CD14-positive monocyte (primary cell): ENCODE measurements at regions of chr9 and their contacts with region 1.

Region 1: GRCh38 chr9:3732077-3733038 is 206.6 kb upstream of the RFX3 start:
- DNase-seq: peak; percentile 19 to 72 (median 54)
- H3K4me3 ChIP-seq: no peak overlapping the region
- H3K4me3 Mint-ChIP-seq: peak overlapping the region in 1 of 2 donors; percentile 51
- H3K27ac ChIP-seq: no peak overlapping the region
- H3K27ac Mint-ChIP-seq: peak overlapping the region in 1 of 7 donors; percentile 24
- H3K4me1 ChIP-seq: peaks cover 14 to 17% of the 10 kb centered on the region in 2 donors
- H3K4me1 Mint-ChIP-seq: peaks cover 18% of the 10 kb centered on the region
- H3K27me3 ChIP-seq: no peaks in the 10 kb centered on the region
- H3K27me3 Mint-ChIP-seq: peaks cover 0 to 1% (median 0%) of the 10 kb centered on the region in 3 donors
- CTCF ChIP-seq: peak; percentile 81

Region 2: GRCh38 chr9:3793971-3794383 is 61.6 kb after region 1 on chr9:
- intact Hi-C with region 1: no loop called
- DNase-seq: no peak
- H3K4me3 ChIP-seq: no peak overlapping the region
- H3K4me3 Mint-ChIP-seq: no peak overlapping the region
- H3K27ac ChIP-seq: no peak overlapping the region
- H3K27ac Mint-ChIP-seq: no peak overlapping the region
- H3K4me1 ChIP-seq: no peaks in the 10 kb centered on the region
- H3K4me1 Mint-ChIP-seq: no peaks in the 10 kb centered on the region
- H3K27me3 ChIP-seq: no peaks in the 10 kb centered on the region
- H3K27me3 Mint-ChIP-seq: peaks cover 0 to 1% (median 1%) of the 10 kb centered on the region in 3 donors
- CTCF ChIP-seq: no peak

Region 3: GRCh38 chr9:4117835-4118610 is 385.7 kb after region 1 on chr9:
- intact Hi-C with region 1: loop called (anchors 5 to 10 kb)
- DNase-seq: peak; percentile 1 to 29 (median 19)
- H3K4me3 ChIP-seq: no peak overlapping the region
- H3K4me3 Mint-ChIP-seq: no peak overlapping the region
- H3K27ac ChIP-seq: no peak overlapping the region
- H3K27ac Mint-ChIP-seq: no peak overlapping the region
- H3K4me1 ChIP-seq: no peaks in the 10 kb centered on the region
- H3K4me1 Mint-ChIP-seq: no peaks in the 10 kb centered on the region
- H3K27me3 ChIP-seq: no peaks in the 10 kb centered on the region
- H3K27me3 Mint-ChIP-seq: peaks cover 0 to 2% (median 2%) of the 10 kb centered on the region in 3 donors
- CTCF ChIP-seq: peak; percentile 71

Region 4: DNA sequence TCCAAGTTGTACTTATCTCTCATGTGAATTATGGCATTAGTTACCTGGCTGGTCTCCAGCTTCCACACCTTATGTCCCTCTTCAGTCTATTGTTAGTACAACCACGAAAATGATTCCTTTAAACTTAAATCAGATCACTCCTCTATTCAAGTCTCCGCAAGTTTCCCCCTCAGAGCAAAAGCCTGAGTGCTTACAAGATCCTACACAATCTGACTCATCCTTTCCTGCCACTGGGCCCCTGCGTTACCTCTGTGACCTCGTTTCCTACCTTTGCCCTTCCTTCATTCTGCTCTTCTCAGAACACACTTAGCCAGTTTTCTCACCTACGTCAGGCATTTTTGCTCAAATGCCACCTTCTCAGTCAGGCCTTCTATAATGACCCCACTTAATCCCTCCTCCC is 612.6 kb after region 1 on chr9:
- intact Hi-C with region 1: loop called in 1 of 2 experiments (anchors 10 kb)
- DNase-seq: no peak
- H3K4me3 ChIP-seq: no peak overlapping the region
- H3K4me3 Mint-ChIP-seq: no peak overlapping the region
- H3K27ac ChIP-seq: no peak overlapping the region
- H3K27ac Mint-ChIP-seq: no peak overlapping the region
- H3K4me1 ChIP-seq: no peaks in the 10 kb centered on the region
- H3K4me1 Mint-ChIP-seq: peaks cover 5% of the 10 kb centered on the region
- H3K27me3 ChIP-seq: no peaks in the 10 kb centered on the region
- H3K27me3 Mint-ChIP-seq: peaks cover 1 to 4% (median 3%) of the 10 kb centered on the region in 3 donors
- CTCF ChIP-seq: no peak